Brain microvascular endothelial cell (primary cell): ENCODE measurements at regions of chr21 and their contacts with region 1.

Region 1: DNA sequence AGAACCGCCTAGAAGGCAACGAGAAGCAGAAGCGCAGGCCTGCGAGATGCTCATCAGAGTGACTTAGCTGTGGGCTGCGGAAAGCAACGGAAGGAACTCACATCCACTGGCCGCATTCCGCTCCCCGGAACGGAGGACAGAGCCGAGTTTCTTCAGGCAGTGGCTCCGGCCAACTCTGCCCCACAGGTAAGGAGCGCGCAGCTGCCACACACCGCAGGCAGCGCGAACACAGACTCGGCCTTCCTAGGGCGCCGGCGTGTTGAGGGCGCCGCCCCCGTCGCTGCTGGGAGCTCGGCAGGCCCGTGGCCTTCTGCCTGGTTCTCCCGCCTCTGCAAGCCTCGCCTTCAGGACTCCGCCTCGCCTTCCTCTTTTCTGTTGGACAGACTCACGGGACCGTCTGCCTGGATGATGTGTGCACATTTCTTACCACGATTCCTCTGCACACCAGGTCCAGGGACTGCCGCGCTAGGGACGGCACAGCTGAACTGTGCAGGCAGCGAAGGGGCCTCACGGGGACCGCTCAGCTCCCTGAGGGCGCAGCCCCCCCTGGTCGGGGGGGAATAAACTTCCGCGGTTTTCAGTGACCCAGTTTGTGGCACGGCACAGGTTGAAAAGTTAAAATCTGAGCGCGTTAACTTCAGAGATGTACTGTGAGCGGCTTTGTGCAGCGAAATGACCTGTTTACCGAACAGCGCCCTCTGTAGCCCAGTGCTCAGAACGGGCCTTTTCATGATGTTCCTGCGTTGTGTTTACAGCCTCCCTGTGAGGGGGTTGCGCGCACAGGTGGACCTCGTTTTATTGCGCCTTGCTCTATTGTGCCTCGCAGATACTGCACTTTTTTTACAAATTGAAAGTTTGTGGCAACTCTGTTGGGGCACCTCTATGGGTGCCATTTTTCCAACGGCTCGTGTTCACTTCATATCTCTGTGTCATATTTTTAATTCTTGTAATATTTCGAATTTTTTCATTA is 15.8 kb downstream of the TCP10L start:
- DNase-seq: peak; percentile 72
- H3K4me3 ChIP-seq: peak overlapping the region; percentile 70
- H3K27ac ChIP-seq: peak overlapping the region; percentile 74
- H3K27me3 ChIP-seq: no peaks in the 10 kb centered on the region
- CTCF ChIP-seq: peak; percentile 92

Region 2: DNA sequence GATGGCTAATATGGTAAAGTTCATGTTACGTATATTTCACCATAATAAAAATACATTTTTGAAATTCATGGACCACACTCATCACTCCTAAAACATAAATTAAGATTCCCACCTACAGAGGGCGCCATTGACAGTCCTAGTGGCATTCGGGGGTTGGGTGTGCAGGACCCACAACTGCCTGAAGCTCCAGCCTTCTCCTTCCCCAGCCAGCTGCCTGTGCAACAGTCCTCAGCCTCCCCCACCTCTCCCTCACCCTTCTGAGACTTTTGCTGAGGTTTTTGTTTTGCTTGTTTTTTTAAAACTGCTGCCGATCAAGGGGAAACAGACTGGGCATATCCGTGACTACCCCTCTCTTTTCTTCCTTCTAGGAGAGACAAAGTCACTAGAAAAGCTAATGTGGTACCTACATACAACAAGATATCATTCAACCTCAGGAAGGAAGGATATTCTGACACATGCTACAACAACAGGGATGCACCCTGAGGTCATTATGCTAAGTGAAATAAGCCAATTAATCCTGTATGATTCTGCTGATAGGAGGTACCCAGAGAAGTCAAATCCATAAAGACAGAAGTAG is 166.3 kb before region 1 on chr21:
- in situ Hi-C with region 1: loop called (anchors 25 kb)
- DNase-seq: peak; percentile 75
- H3K4me3 ChIP-seq: no peak overlapping the region
- H3K27ac ChIP-seq: no peak overlapping the region
- H3K27me3 ChIP-seq: no peaks in the 10 kb centered on the region
- CTCF ChIP-seq: peak; percentile 75

Region 3: DNA sequence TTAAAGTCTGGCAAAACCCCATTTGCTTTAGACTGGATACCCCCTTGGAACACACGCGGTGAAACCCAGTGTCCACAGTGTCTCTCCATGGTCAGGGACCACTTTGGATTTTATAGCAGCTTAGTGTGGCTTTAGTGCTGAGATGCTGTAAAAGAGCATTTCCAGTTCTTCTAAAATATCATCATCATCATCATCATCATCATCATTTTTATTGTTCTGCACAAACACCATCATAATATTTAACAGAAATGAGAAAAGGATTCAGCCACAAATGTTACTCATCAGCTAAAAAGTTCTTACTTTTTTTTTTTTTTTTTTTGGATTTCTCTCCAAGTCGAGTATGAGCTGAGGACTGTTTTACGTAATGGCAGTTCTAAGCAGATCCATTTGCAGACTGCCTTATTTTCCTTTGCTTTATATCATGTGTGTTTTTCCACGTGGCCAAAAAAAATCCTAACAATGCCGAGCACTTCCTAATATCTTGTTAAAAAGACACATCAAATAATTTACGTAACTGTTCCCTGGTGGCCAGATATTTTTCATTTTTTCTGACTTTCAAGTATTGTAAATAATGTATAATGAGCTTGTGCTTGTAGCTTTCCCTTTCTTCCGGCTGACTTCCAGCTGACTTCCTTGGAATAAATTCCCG is 94.3 kb before region 1 on chr21:
- in situ Hi-C with region 1: no loop called
- DNase-seq: peak; percentile 73
- H3K4me3 ChIP-seq: no peak overlapping the region
- H3K27ac ChIP-seq: peak overlapping the region; percentile 11
- H3K27me3 ChIP-seq: no peaks in the 10 kb centered on the region
- CTCF ChIP-seq: no peak

Region 4: GRCh38 chr21:32735524-32735923 is 166.0 kb after region 1 on chr21:
- in situ Hi-C with region 1: no loop called
- DNase-seq: no peak
- H3K4me3 ChIP-seq: no peak overlapping the region
- H3K27ac ChIP-seq: no peak overlapping the region
- H3K27me3 ChIP-seq: no peaks in the 10 kb centered on the region
- CTCF ChIP-seq: no peak